Naive thymus-derived CD4-positive, alpha-beta T cell (primary cell): ENCODE measurements at regions of chr1 and their contacts with region 1.

Region 1: GRCh38 chr1:202315576-202316168 is 26.1 kb downstream of the UBE2T start:
- DNase-seq: peak; percentile 42 to 74 (median 64)
- ATAC-seq: peak; percentile 88
- H3K4me3 ChIP-seq: no peak overlapping the region
- H3K4me3 Mint-ChIP-seq: no peak overlapping the region
- H3K27ac ChIP-seq: no peak overlapping the region
- H3K27ac Mint-ChIP-seq: no peak overlapping the region
- H3K4me1 ChIP-seq: no peaks in the 10 kb centered on the region
- H3K4me1 Mint-ChIP-seq: peaks cover 0 to 10% (median 0%) of the 10 kb centered on the region in 7 donors
- H3K27me3 ChIP-seq: no peaks in the 10 kb centered on the region
- H3K27me3 Mint-ChIP-seq: peaks cover 0 to 33% (median 0%) of the 10 kb centered on the region in 5 donors

Region 2: DNA sequence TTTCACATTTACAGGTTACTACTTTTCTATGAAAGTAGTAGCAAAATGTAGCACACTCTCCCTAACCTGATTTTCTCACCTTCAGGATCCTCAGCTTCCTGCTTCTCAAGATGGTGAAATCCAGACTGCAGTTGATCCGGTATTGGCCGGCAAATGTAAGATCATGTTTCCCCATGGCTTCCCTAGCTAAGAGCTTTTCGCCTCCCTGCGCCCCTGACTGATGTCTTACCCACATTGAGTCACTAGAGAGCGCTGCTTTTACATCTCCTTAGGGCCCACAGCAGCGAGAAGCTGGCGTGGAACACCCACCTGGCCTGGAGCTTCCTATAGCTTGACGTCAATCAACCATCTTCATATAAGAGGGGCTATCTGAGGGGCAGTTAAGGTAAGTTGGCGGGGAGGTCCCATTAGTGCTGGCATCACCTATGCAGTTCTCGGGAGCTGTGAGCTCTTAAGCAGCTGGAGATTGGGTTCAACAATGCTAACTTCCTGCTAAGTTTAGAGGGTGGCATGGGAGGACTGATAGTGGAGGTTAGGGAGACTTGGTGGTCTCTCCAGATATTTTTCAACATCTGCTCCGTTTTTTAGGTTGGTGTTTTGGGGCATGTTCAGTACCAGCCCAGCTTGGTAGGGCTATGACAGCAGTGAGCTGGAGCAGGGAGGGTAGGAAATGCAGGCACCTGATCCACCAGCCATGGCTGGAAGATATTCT is 160.8 kb before region 1 on chr1:
- CTCF ChIA-PET with region 1: interaction called, 19 read pairs
- POLR2A ChIA-PET with region 1: no interaction called
- intact Hi-C with region 1: loop called in 1 of 2 experiments (anchors 1 kb)
- DNase-seq: peak in 5 of 9 donors; percentile 45 to 52 (median 48)
- ATAC-seq: peak; percentile 85
- H3K4me3 ChIP-seq: no peak overlapping the region
- H3K4me3 Mint-ChIP-seq: peak overlapping the region in 2 of 10 donors; percentile 1 to 46
- H3K27ac ChIP-seq: peak overlapping the region; percentile 47
- H3K27ac Mint-ChIP-seq: peak overlapping the region; percentile 17 to 87 (median 67)
- H3K4me1 ChIP-seq: peaks cover 29 to 35% of the 10 kb centered on the region in 2 donors
- H3K4me1 Mint-ChIP-seq: peaks cover 28 to 58% (median 51%) of the 10 kb centered on the region in 7 donors
- H3K27me3 ChIP-seq: no peaks in the 10 kb centered on the region
- H3K27me3 Mint-ChIP-seq: no peaks in the 10 kb centered on the region

Region 3: GRCh38 chr1:202184750-202185460 is 130.8 kb before region 1 on chr1:
- CTCF ChIA-PET with region 1: interaction called, 10 read pairs
- POLR2A ChIA-PET with region 1: no interaction called
- intact Hi-C with region 1: loop called (anchors 1 kb)
- DNase-seq: peak in 6 of 9 donors; percentile 20 to 77 (median 48)
- ATAC-seq: peak; percentile 71
- H3K4me3 ChIP-seq: no peak overlapping the region
- H3K4me3 Mint-ChIP-seq: no peak overlapping the region
- H3K27ac ChIP-seq: no peak overlapping the region
- H3K27ac Mint-ChIP-seq: peak overlapping the region in 1 of 9 donors; percentile 41
- H3K4me1 ChIP-seq: no peaks in the 10 kb centered on the region
- H3K4me1 Mint-ChIP-seq: peaks cover 9 to 14% (median 12%) of the 10 kb centered on the region in 7 donors
- H3K27me3 ChIP-seq: no peaks in the 10 kb centered on the region
- H3K27me3 Mint-ChIP-seq: peaks cover 0 to 6% (median 0%) of the 10 kb centered on the region in 5 donors

Region 4: GRCh38 chr1:202235856-202236837 is 79.5 kb before region 1 on chr1:
- CTCF ChIA-PET with region 1: no interaction called
- POLR2A ChIA-PET with region 1: no interaction called
- intact Hi-C with region 1: loop called (anchors 1 to 2 kb)
- DNase-seq: peak; percentile 11 to 73 (median 45)
- ATAC-seq: peak; percentile 86
- H3K4me3 ChIP-seq: no peak overlapping the region
- H3K4me3 Mint-ChIP-seq: no peak overlapping the region
- H3K27ac ChIP-seq: no peak overlapping the region
- H3K27ac Mint-ChIP-seq: no peak overlapping the region
- H3K4me1 ChIP-seq: no peaks in the 10 kb centered on the region
- H3K4me1 Mint-ChIP-seq: peaks cover 0 to 7% (median 0%) of the 10 kb centered on the region in 7 donors
- H3K27me3 ChIP-seq: no peaks in the 10 kb centered on the region
- H3K27me3 Mint-ChIP-seq: peaks cover 4 to 27% (median 7%) of the 10 kb centered on the region in 5 donors

Region 5: DNA sequence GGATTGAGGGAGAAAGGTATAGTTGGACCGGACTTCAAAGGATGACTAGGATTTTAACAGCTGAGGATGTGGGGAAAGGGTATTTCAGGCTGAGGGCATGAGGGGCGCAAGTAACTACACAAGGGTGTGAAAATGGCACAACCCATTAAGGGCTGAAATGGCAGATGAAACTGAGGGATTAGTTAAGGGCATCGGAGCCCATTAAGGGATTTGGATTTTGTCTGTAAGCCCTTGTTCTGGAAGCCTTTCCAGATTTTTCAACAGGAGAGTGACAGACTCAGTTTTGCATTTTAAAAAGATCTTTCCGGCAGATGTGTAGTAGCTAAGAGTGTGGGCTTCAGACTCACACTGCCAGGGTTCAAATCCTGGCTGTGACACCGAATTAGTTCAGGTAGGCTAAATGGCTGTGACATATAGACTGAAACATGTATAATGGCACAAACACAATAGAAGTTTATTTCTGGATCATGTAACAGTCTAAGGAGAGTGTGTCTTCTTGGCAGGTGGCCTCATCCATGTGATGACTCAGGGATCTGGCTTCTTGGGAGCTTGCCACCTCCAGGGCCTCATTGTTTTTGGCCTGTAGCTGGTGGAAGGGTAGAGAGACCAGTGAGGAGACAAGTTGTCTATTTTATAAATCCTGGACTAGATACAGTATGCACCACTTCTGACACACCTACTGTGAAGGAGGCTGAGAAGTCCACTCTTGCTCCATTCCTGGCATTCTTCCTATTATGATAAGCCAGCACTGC is 23.5 kb before region 1 on chr1:
- CTCF ChIA-PET with region 1: no interaction called
- POLR2A ChIA-PET with region 1: no interaction called
- intact Hi-C with region 1: loop called in 1 of 2 experiments (anchors 1 kb)
- DNase-seq: no peak
- ATAC-seq: no peak
- H3K4me3 ChIP-seq: no peak overlapping the region
- H3K4me3 Mint-ChIP-seq: no peak overlapping the region
- H3K27ac ChIP-seq: no peak overlapping the region
- H3K27ac Mint-ChIP-seq: peak overlapping the region in 2 of 9 donors; percentile 8 to 23
- H3K4me1 ChIP-seq: peaks cover 10 to 20% of the 10 kb centered on the region in 2 donors
- H3K4me1 Mint-ChIP-seq: peaks cover 11 to 25% (median 15%) of the 10 kb centered on the region in 7 donors
- H3K27me3 ChIP-seq: no peaks in the 10 kb centered on the region
- H3K27me3 Mint-ChIP-seq: peaks cover 0 to 30% (median 0%) of the 10 kb centered on the region in 5 donors